ENCODE measurements at regions of chr1 and their contacts with region 1.

Region 1: GRCh38 chr1:211578640-211579433 is at the start of gene SLC30A1:
- DNase-seq: peak; percentile 99
- H3K4me3 ChIP-seq: peak within 1 kb of the TSS; percentile 72 to 99 (median 90)
- H3K27ac ChIP-seq: peak within 1 kb of the TSS; percentile 96 to 99 (median 98)
- H3K4me1 ChIP-seq: peaks cover 22 to 83% (median 63%) of the 10 kb centered on the region in 6 donors
- H3K27me3 ChIP-seq: no peaks in the 10 kb centered on the region
- CTCF ChIP-seq: peak in 3 of 11 experiments; percentile 9 to 36 (median 12)
- POLR2A ChIP-seq: peak; percentile 12 to 85 (median 36)
- total RNA-seq, gene SLC30A1: 28.0 to 38.5 (median 32.8) TPM

Region 2: GRCh38 chr1:211267204-211267857 is 311.5 kb before region 1 on chr1:
- intact Hi-C with region 1: no loop called
- DNase-seq: no peak
- H3K4me3 ChIP-seq: no peak overlapping the region
- H3K27ac ChIP-seq: no peak overlapping the region
- H3K4me1 ChIP-seq: peaks cover 0 to 30% (median 8%) of the 10 kb centered on the region in 6 donors
- H3K27me3 ChIP-seq: no peaks in the 10 kb centered on the region
- CTCF ChIP-seq: no peak
- POLR2A ChIP-seq: no peak

Region 3: DNA sequence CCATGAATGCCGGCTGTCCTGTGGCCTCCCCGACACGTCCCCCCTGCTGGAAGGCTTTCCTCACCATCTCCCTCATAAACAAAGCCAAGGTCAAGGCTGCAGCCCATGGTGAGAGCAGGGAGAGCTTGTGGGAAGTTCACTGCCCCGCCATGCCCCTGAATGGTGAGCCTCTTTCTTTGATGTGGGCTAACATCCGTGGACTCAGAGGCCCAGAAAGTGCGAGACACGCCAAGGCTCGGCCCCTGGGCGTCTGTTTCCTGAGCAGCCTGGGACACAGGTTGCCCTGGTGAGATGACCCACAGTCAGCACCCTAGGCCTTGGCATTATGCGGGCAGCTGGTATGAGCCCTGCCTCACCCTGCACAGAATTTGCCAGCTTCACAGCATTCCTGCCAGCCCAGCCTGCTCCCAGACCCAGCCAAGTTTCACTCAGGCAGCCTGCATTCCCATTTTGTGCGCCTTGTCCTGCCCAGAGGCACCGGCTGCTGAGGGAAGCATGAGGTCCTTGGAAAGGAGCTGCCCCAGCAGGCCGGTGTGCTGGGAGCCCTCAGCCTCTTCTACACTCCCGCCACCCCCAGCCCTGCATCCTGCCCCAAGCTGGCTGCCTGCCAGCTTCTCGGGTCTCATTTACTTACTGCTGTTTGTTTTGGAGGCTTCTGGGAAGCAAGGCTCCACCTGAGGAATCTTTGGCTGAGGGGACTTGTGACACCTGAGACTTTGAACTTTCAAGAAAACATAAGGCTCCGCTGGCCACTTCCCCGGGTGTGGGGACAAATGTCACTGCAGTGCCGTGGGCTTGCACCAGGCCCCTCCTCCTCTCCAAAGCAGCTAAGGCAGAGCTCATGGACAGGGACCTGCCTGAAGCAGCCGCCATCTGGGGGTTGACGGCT is 64.7 kb after region 1 on chr1:
- intact Hi-C with region 1: loop called (anchors 5 kb)
- DNase-seq: no peak
- H3K4me3 ChIP-seq: no peak overlapping the region
- H3K27ac ChIP-seq: peak overlapping the region; percentile 60 to 76 (median 70)
- H3K4me1 ChIP-seq: peaks cover 0 to 17% (median 12%) of the 10 kb centered on the region in 6 donors
- H3K27me3 ChIP-seq: no peaks in the 10 kb centered on the region
- CTCF ChIP-seq: no peak
- POLR2A ChIP-seq: no peak

Region 4: DNA sequence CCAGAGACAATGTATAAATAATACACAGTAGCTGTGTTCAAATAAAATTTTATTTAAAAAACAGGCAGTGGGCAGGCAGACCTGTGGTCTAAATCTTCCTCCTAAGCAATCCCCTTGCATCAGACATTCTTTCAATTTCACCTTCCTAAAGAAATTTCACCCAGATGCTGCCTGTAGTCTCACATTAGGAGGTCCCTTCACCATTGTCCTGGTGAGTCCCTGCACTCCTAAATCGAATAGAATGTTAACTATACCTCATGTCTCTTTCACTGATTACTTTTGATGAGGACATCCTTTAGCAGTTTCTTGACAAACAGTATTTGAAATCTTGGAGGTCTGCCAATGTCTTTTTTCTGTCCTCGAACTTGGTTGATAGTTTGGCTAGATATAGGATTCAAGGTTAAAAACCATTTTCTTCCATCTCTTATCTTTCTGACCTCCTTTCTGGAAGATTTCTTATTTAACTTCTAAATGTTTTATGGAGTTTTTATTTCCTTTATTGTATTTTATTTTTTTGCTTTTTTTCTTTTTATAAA is 174.2 kb after region 1 on chr1:
- intact Hi-C with region 1: no loop called
- DNase-seq: no peak
- H3K4me3 ChIP-seq: no peak overlapping the region
- H3K27ac ChIP-seq: no peak overlapping the region
- H3K4me1 ChIP-seq: peaks cover 0 to 15% (median 1%) of the 10 kb centered on the region in 6 donors
- H3K27me3 ChIP-seq: no peaks in the 10 kb centered on the region
- CTCF ChIP-seq: no peak
- POLR2A ChIP-seq: no peak

Region 5: DNA sequence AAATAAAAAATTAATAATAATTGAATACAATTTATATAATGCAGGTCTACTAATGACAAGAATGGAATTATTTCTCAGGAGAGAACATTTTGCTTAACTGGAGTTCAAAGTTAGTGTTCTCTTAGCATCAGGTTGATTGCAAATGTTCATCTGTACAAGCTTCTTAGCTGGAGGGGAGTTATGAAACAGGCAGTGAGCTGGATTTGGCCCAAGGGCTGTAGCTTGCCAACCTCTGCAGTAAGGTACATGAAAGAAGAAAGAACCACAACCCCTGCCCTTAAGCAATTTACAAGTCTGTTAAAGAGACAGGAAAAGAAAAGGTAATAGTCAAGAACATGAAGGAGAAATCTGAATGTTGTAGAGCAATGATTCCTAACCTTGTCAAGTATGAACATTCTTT is 234.8 kb after region 1 on chr1:
- intact Hi-C with region 1: no loop called
- DNase-seq: no peak
- H3K4me3 ChIP-seq: no peak overlapping the region
- H3K27ac ChIP-seq: peak overlapping the region in 3 of 8 donors; percentile 6 to 80 (median 16)
- H3K4me1 ChIP-seq: peaks cover 0 to 63% (median 15%) of the 10 kb centered on the region in 6 donors
- H3K27me3 ChIP-seq: no peaks in the 10 kb centered on the region
- CTCF ChIP-seq: no peak
- POLR2A ChIP-seq: no peak

Region 6: GRCh38 chr1:211965108-211965805 is 386.4 kb after region 1 on chr1:
- intact Hi-C with region 1: no loop called
- DNase-seq: no peak
- H3K4me3 ChIP-seq: no peak overlapping the region
- H3K27ac ChIP-seq: no peak overlapping the region
- H3K4me1 ChIP-seq: no peaks in the 10 kb centered on the region
- H3K27me3 ChIP-seq: no peaks in the 10 kb centered on the region
- CTCF ChIP-seq: no peak
- POLR2A ChIP-seq: no peak

Measured in spleen (tissue), 13 donors.